CD8-positive, alpha-beta memory T cell (primary cell): ENCODE measurements at regions of chr11 and their contacts with region 1.

Region 1: DNA sequence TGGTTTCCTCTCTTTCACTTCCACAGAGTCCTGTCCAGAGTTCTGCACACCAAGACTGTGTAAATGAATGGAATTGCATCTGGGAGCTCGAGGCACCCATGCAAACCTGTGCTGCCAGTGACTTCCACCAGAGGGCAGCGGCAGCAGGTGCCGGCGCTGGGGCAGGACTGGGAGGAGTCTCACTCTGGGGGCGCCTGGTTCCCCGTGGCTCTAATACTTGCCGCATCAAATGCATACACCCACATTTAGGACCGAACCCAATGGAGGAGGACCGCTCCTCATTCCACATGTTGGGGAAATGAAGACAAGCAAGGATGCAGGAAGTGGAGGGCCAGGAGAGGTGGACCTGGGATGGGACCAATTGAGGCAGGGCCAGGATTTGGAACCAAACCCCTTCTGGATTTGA is 1.1 kb upstream of the CD6 start:
- DNase-seq: peak; percentile 72 to 87 (median 74)
- H3K4me3 ChIP-seq: peak overlapping the region; percentile 93
- H3K4me3 Mint-ChIP-seq: peak overlapping the region; percentile 84 to 97 (median 93)
- H3K27ac ChIP-seq: no peak overlapping the region
- H3K27ac Mint-ChIP-seq: peak overlapping the region; percentile 26 to 99 (median 94)
- H3K4me1 ChIP-seq: peaks cover 21% of the 10 kb centered on the region
- H3K4me1 Mint-ChIP-seq: peaks cover 31 to 39% (median 35%) of the 10 kb centered on the region in 3 donors
- H3K27me3 ChIP-seq: no peaks in the 10 kb centered on the region
- H3K27me3 Mint-ChIP-seq: peaks cover 0 to 1% of the 10 kb centered on the region in 2 donors

Region 2: DNA sequence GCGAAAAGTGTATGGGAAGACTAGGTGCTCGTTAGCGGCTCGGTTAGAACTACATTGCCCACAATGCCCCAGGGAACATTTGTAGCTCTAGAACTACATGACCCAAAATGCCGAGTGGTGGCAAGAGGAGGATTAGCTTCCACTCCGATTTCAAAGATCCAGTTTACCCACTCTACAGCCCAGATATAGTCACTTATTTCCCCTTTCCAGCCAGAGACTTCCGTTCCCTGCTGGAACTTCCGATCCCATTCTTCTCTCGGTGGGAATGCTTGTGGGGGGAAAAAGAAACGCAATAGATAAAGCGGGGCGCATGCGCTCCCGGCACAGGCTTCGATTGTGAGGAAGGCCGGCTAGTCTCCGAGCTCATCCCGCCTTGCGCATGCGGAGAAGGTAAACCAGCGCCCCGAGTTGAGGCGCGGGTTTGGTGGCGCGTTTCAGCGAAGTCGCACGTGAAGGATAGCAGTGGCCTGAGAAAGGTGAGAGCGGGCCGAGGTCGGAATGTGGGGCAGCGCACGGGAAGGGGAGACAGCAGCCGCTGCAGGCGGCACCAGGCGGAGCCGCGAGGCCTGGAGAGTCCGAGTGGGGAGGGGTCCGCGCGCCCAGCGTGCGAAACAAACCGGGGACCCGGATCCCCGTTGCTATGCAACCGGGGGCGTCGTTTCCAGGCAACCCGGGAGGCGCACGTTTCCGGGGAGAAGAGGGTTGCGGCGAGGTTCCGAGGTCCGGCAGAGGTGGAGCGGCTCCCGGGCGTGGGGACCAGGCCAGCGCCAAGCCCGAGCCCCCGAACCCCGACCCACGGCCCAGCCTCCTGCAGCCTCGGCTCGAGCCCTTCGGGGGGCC is 56.4 kb before region 1 on chr11 and contains the start of gene TMEM109:
- CTCF ChIA-PET with region 1: interaction called, 13 read pairs
- POLR2A ChIA-PET with region 1: interaction called, 5 read pairs
- DNase-seq: peak; percentile 82 to 92 (median 88)
- H3K4me3 ChIP-seq: peak within 1 kb of the TSS; percentile 91
- H3K4me3 Mint-ChIP-seq: peak within 1 kb of the TSS; percentile 93 to 99 (median 97)
- H3K27ac ChIP-seq: peak within 1 kb of the TSS; percentile 82
- H3K27ac Mint-ChIP-seq: peak within 1 kb of the TSS; percentile 95 to 99 (median 98)
- H3K4me1 ChIP-seq: peaks cover 47% of the 10 kb centered on the region
- H3K4me1 Mint-ChIP-seq: peaks cover 59 to 81% (median 63%) of the 10 kb centered on the region in 3 donors
- H3K27me3 ChIP-seq: no peaks in the 10 kb centered on the region
- H3K27me3 Mint-ChIP-seq: no peaks in the 10 kb centered on the region
- total RNA-seq, gene TMEM109: 144 to 147 TPM

Region 3: DNA sequence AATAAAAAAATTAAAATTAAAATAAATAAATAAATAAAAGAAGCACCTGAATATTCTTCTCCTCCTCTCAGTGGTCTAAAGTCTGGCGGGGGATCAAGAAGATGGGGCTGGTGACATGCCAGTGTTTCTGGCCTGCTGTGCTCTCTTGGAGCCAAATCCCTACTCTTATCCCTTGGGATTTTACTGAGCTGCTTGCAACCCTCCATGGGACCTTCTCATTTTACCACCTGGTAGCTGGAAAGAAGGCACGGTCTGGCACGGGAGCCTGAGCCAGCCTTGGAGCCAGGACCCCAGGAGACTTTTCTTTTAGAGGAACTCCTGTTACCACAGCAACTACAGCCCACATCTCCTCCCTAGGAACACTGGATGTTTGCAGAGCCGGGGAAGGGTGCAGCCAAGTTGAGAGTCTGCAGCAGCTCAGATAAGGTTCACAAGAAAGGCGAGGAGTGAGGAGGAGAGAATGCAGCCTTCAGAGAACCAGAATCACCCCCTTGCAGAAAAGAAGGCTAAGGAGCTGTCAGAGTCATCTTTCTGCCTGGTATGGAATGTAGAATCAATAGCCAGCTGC is 22.6 kb after region 1 on chr11:
- CTCF ChIA-PET with region 1: interaction called, 10 read pairs
- POLR2A ChIA-PET with region 1: no interaction called
- DNase-seq: no peak
- H3K4me3 ChIP-seq: peak overlapping the region; percentile 34
- H3K4me3 Mint-ChIP-seq: peak overlapping the region in 4 of 7 donors; percentile 14 to 53 (median 50)
- H3K27ac ChIP-seq: no peak overlapping the region
- H3K27ac Mint-ChIP-seq: peak overlapping the region in 7 of 8 donors; percentile 67 to 88 (median 83)
- H3K4me1 ChIP-seq: peaks cover 69% of the 10 kb centered on the region
- H3K4me1 Mint-ChIP-seq: peaks cover 48 to 86% (median 77%) of the 10 kb centered on the region in 3 donors
- H3K27me3 ChIP-seq: no peaks in the 10 kb centered on the region
- H3K27me3 Mint-ChIP-seq: no peaks in the 10 kb centered on the region

Region 4: GRCh38 chr11:61083601-61084147 is 113.3 kb after region 1 on chr11:
- CTCF ChIA-PET with region 1: interaction called, 18 read pairs
- POLR2A ChIA-PET with region 1: interaction called, 5 read pairs
- DNase-seq: peak; percentile 51 to 87 (median 67)
- H3K4me3 ChIP-seq: peak overlapping the region; percentile 57
- H3K4me3 Mint-ChIP-seq: peak overlapping the region; percentile 26 to 87 (median 75)
- H3K27ac ChIP-seq: peak overlapping the region; percentile 66
- H3K27ac Mint-ChIP-seq: peak overlapping the region; percentile 94 to 99 (median 96)
- H3K4me1 ChIP-seq: peaks cover 50% of the 10 kb centered on the region
- H3K4me1 Mint-ChIP-seq: peaks cover 38 to 58% (median 52%) of the 10 kb centered on the region in 3 donors
- H3K27me3 ChIP-seq: no peaks in the 10 kb centered on the region
- H3K27me3 Mint-ChIP-seq: peaks cover 0 to 1% of the 10 kb centered on the region in 2 donors

Region 5: GRCh38 chr11:61091373-61092279 is 121.3 kb after region 1 on chr11:
- CTCF ChIA-PET with region 1: interaction called, 14 read pairs
- POLR2A ChIA-PET with region 1: no interaction called
- DNase-seq: no peak
- H3K4me3 ChIP-seq: peak overlapping the region; percentile 28
- H3K4me3 Mint-ChIP-seq: peak overlapping the region in 3 of 7 donors; percentile 23 to 61 (median 52)
- H3K27ac ChIP-seq: no peak overlapping the region
- H3K27ac Mint-ChIP-seq: peak overlapping the region in 7 of 8 donors; percentile 61 to 95 (median 78)
- H3K4me1 ChIP-seq: peaks cover 22% of the 10 kb centered on the region
- H3K4me1 Mint-ChIP-seq: peaks cover 21 to 51% (median 47%) of the 10 kb centered on the region in 3 donors
- H3K27me3 ChIP-seq: no peaks in the 10 kb centered on the region
- H3K27me3 Mint-ChIP-seq: peaks cover 0 to 3% of the 10 kb centered on the region in 2 donors

Region 6: DNA sequence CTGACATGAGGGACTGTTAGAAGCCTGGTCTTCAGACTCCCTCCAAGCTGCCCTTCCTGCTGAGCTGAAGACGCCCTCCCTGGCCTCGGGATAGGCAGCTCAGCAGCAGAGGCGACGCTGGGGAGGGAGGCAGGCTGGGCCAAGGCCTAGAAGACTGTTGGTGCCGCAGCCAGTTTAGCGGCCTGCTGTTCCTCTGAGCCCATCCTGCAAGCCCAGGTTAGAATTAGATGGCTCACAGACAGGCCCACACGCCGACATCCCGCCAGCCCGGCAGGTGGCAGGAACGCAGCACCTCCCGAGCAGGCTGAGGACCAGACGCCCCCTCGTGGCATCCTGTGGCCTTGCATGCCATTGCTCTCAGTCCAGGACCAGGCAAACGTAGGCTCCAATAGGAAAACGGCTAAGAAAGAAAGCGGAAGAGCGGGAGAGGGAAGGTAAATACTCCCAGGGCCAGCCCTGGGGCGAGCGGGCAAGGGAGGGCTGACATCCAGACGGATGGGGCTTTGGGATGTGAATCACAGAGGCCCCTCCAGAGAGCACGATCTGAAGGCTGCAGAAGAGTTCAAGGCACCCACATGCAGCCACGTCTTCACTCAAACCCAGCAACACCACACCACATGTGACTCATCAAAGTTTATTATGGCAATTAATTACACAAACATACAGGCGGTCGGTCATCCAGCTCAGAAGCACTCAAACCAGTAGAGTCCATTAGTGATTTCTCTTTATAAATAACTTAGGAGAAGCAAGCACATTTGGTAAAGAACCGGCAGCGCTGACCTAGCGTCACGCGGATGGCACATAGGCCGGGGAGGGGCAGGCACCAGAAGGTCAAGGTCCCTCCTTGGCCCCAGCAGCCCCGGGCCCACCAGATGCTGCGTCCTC is 159.5 kb after region 1 on chr11:
- CTCF ChIA-PET with region 1: interaction called, 12 read pairs
- POLR2A ChIA-PET with region 1: interaction called, 4 read pairs
- DNase-seq: peak; percentile 81 to 91 (median 86)
- H3K4me3 ChIP-seq: no peak overlapping the region
- H3K4me3 Mint-ChIP-seq: peak overlapping the region in 5 of 7 donors; percentile 9 to 70 (median 37)
- H3K27ac ChIP-seq: no peak overlapping the region
- H3K27ac Mint-ChIP-seq: peak overlapping the region; percentile 1 to 94 (median 62)
- H3K4me1 ChIP-seq: peaks cover 19% of the 10 kb centered on the region
- H3K4me1 Mint-ChIP-seq: peaks cover 5 to 20% (median 11%) of the 10 kb centered on the region in 3 donors
- H3K27me3 ChIP-seq: no peaks in the 10 kb centered on the region
- H3K27me3 Mint-ChIP-seq: no peaks in the 10 kb centered on the region

Region 7: GRCh38 chr11:61187505-61188130 is 217.2 kb after region 1 on chr11:
- CTCF ChIA-PET with region 1: interaction called, 10 read pairs
- POLR2A ChIA-PET with region 1: no interaction called
- DNase-seq: peak; percentile 63 to 86 (median 71)
- H3K4me3 ChIP-seq: no peak overlapping the region
- H3K4me3 Mint-ChIP-seq: no peak overlapping the region
- H3K27ac ChIP-seq: no peak overlapping the region
- H3K27ac Mint-ChIP-seq: peak overlapping the region in 1 of 8 donors; percentile 73
- H3K4me1 ChIP-seq: no peaks in the 10 kb centered on the region
- H3K4me1 Mint-ChIP-seq: no peaks in the 10 kb centered on the region
- H3K27me3 ChIP-seq: no peaks in the 10 kb centered on the region
- H3K27me3 Mint-ChIP-seq: peaks cover 0 to 17% of the 10 kb centered on the region in 2 donors